ENCODE measurements at regions of chr11 and their contacts with region 1.

Region 1: DNA sequence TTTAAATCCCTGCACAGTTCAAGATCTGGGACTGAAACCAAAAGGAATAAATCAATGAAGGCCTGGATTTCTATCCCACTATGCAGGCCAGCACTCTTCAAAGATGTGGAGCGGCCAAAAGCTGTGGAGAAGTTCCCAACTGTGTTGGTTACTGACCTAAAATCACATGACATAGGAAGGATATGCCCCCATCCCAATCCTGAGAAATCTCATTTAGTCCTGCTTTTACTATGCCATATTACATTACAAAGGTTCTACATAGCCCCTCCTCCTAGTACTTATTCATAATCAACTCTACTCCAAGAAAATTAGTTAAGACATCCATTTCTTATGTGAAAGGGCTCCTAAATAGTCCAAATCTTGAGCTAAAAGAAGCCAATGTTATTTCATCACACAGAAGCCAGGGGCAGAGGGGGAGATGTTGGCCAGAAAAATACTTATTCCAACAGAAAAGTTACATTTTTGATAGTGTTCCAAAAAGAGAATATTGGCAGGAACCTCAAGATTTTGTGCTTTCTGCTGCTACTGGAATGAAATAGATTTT is 95.8 kb downstream of the CADM1 start:
- DNase-seq: no peak
- ATAC-seq: no peak
- H3K4me3 ChIP-seq: no peak overlapping the region
- H3K27ac ChIP-seq: no peak overlapping the region
- H3K4me1 ChIP-seq: no peaks in the 10 kb centered on the region
- H3K27me3 ChIP-seq: no peaks in the 10 kb centered on the region
- CTCF ChIP-seq: no peak

Region 2: GRCh38 chr11:114297806-114298700 is 1110.4 kb before region 1 on chr11:
- CTCF ChIA-PET with region 1: no interaction called
- POLR2A ChIA-PET with region 1: interaction called, 15 read pairs
- in situ Hi-C with region 1: no loop called
- intact Hi-C with region 1: no loop called
- DNase-seq: no peak
- ATAC-seq: no peak
- H3K4me3 ChIP-seq: no peak overlapping the region; a peak in 1 of 4 replicates
- H3K27ac ChIP-seq: no peak overlapping the region
- H3K4me1 ChIP-seq: no peaks in the 10 kb centered on the region
- H3K27me3 ChIP-seq: no peaks in the 10 kb centered on the region
- CTCF ChIP-seq: no peak